PC-3 (cell line): ENCODE measurements at regions of chr11 and their contacts with region 1.

Region 1: DNA sequence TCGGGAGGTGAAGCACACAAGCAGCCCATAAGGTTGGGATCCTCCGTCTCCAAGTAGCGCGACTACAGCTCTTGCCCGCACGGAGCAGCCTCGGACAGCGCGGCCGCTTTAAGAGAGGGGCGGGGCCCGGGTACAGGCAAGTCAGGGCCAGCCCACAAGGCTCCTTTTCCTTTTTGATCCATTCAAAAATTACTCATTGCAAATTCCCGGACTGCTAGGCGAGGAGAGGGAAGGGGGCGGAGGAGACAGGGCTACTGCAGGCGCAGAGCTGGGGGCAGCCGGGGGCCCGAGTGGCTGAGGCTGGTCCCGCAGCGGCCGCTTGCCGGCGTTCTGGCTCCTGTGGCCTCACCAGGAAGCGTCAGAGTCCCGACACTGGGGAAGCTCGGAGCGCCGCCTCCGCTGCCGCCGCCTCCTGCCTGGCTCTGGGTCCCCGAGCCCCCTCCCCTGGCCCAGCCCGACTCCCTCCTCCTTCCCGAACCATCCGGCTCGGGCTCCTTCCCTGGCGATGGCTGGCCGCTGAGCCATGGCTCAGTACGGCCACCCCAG is at the start of gene UBASH3B:
- DNase-seq: peak; percentile 96
- ATAC-seq: peak; percentile 80
- H3K4me3 ChIP-seq: peak within 1 kb of the TSS; percentile 78
- H3K27ac ChIP-seq: peak within 1 kb of the TSS; percentile 76
- H3K4me1 ChIP-seq: peaks cover 37% of the 10 kb centered on the region
- H3K27me3 ChIP-seq: no peaks in the 10 kb centered on the region
- CTCF ChIP-seq: no peak
- total RNA-seq, gene UBASH3B: 148 and 178 TPM in 2 replicates

Region 2: DNA sequence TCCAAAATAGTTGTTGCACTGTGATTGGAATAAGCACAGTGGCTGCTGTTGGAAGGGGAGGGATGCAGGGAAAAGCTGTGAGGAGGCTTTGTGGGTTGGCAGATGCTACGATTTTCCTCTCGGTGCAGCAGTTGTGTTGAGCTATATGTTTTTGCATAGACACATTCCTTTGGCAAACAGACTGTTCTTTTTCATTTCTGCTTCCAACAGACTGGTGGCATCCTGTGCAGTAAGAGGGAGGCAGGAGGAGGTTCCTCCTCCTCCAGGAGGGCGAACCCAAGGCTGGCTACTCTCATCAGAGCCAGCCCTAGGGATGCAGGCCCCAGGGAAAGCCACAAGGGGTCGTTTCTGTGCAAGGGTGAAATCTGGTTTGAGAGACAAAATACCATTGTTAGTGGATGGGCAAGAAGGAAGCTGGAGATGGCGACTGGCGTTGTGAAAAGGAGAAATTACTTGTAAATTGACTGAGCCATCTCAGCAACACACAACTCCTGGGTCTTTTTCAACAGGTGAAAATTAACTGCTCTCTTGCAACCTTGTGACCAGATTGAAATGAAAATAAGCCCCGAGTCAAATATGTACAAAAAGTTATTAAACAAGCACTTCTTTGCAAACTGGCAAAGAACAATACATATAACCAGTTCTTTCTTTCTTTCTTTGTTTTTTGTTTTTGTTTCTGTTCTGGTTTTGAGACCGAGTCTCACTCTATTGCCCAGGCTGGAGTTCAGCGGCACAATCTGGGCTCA is 26.6 kb before region 1 on chr11:
- CTCF ChIA-PET with region 1: interaction called, 7 read pairs
- POLR2A ChIA-PET with region 1: no interaction called
- intact Hi-C with region 1: loop called (anchors 1 kb)
- DNase-seq: peak; percentile 94
- ATAC-seq: peak; percentile 96
- H3K4me3 ChIP-seq: no peak overlapping the region
- H3K27ac ChIP-seq: no peak overlapping the region
- H3K4me1 ChIP-seq: peaks cover 14% of the 10 kb centered on the region; the same call in 1 of the 2 replicates
- H3K27me3 ChIP-seq: no peaks in the 10 kb centered on the region
- CTCF ChIP-seq: peak; percentile 98

Region 3: GRCh38 chr11:122676638-122677037 is 21.0 kb after region 1 on chr11:
- CTCF ChIA-PET with region 1: no interaction called
- POLR2A ChIA-PET with region 1: interaction called, 3 read pairs
- intact Hi-C with region 1: loop called (anchors 2 kb)
- DNase-seq: peak; percentile 87
- ATAC-seq: peak; percentile 75
- H3K4me3 ChIP-seq: no peak overlapping the region; the same call in 1 of the 2 replicates
- H3K27ac ChIP-seq: peak overlapping the region; percentile 26
- H3K4me1 ChIP-seq: peaks cover 33% of the 10 kb centered on the region
- H3K27me3 ChIP-seq: no peaks in the 10 kb centered on the region
- CTCF ChIP-seq: no peak

Region 4: GRCh38 chr11:122727101-122727929 is 71.7 kb after region 1 on chr11:
- CTCF ChIA-PET with region 1: interaction called, 13 read pairs
- POLR2A ChIA-PET with region 1: no interaction called
- intact Hi-C with region 1: no loop called
- DNase-seq: no peak
- ATAC-seq: no peak
- H3K4me3 ChIP-seq: no peak overlapping the region
- H3K27ac ChIP-seq: no peak overlapping the region
- H3K4me1 ChIP-seq: peaks cover 37% of the 10 kb centered on the region
- H3K27me3 ChIP-seq: no peaks in the 10 kb centered on the region
- CTCF ChIP-seq: no peak

Region 5: DNA sequence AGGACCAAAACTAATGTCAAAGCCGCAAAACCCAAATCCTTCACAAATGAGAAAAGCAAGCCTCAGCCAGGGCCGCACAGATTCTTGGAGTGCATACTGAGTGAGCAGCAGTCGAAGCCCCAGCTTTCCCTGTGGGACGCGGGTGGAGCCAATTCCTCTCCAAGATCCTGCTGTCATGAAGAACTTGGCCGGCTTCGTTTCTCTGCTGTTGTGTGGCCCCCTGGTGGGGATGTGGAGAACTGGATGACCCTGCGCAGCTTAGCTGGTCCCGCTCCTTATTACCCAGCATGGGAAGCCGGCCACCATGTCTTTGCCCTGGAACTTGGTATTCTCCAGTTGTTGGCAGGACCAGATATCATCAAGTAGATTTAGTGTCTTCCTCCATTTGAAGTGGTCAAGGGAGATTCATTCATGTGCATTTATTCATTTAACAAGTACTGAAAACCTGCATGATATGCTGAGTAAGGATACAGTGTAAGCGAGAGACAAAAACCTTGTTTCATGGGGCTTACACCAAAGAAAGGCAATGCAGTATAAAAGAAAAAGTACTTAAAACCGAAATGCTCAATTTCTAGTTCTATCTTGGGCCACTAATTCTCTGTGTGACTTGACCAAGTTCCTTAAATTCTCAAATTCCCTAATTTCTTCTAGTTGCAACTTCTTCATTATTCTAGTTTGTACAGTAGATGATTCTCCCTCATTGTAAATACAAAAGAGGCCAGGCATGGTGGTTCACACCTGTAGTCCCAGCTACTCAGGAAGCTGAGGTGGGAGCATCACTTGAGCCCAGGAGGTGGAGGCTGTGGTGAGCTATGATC is 126.0 kb after region 1 on chr11:
- CTCF ChIA-PET with region 1: interaction called, 15 read pairs
- POLR2A ChIA-PET with region 1: interaction called, 3 read pairs
- intact Hi-C with region 1: no loop called
- DNase-seq: peak; percentile 95
- ATAC-seq: peak; percentile 98
- H3K4me3 ChIP-seq: no peak overlapping the region
- H3K27ac ChIP-seq: no peak overlapping the region
- H3K4me1 ChIP-seq: peaks cover 14% of the 10 kb centered on the region
- H3K27me3 ChIP-seq: no peaks in the 10 kb centered on the region
- CTCF ChIP-seq: peak; percentile 98

Region 6: GRCh38 chr11:123560006-123560405 is 904.4 kb after region 1 on chr11:
- CTCF ChIA-PET with region 1: no interaction called
- POLR2A ChIA-PET with region 1: no interaction called
- intact Hi-C with region 1: no loop called
- DNase-seq: no peak
- ATAC-seq: no peak
- H3K4me3 ChIP-seq: no peak overlapping the region
- H3K27ac ChIP-seq: no peak overlapping the region
- H3K4me1 ChIP-seq: no peaks in the 10 kb centered on the region; the same call in 1 of the 2 replicates
- H3K27me3 ChIP-seq: no peaks in the 10 kb centered on the region
- CTCF ChIP-seq: no peak